Activated CD8-positive, alpha-beta T cell treated with anti-CD3 and anti-CD28 coated beads, Interleukin-2, amount 10 ng/mL, durations not matched to agents 7 days and 5 days (primary cell): ENCODE measurements at regions of chr7 and their contacts with region 1.

Region 1: DNA sequence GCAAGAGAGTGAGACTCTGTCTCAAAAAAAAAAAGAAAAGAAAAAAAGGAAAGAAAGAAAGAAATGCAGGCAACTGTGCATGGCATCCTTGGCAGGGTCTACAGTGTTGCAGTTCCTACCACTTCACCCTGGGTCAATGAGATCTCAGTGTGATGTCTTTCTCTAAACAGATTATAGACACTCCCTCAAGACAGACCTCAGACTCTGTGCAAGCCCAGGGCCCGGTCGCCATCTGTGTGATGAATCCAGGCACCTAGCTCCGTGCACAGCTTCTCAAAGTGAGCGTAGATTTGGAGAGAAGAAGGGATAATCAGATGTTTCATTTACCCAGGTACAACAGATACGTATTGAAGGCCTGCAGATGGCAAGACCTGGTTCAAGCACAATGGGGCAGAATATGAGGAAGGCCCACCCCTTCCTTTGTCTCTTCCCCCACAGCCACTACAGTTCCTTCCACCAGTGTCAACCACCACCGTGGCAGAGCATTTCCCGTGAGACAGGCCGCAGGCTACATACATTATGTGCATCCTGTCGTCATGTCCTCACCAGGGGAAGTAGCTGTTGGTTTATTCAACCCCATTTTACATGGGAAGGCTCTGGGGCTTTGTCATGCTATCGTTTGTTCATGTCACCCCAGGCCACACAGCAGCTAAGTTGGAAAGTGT is 471.7 kb upstream of the GALNT17 start:
- DNase-seq: peak; percentile 85
- ATAC-seq: peak; percentile 95
- H3K4me3 Mint-ChIP-seq: no peak overlapping the region
- H3K27ac Mint-ChIP-seq: peak overlapping the region; percentile 82
- H3K4me1 Mint-ChIP-seq: peaks cover 44% of the 10 kb centered on the region
- H3K27me3 Mint-ChIP-seq: no peaks in the 10 kb centered on the region

Region 2: GRCh38 chr7:70647801-70648498 is 12.3 kb before region 1 on chr7:
- CTCF ChIA-PET with region 1: interaction called, 7 read pairs
- POLR2A ChIA-PET with region 1: interaction called, 13 read pairs
- DNase-seq: peak; percentile 95
- ATAC-seq: peak; percentile 98
- H3K4me3 Mint-ChIP-seq: peak overlapping the region; percentile 26
- H3K27ac Mint-ChIP-seq: peak overlapping the region; percentile 82
- H3K4me1 Mint-ChIP-seq: peaks cover 36% of the 10 kb centered on the region
- H3K27me3 Mint-ChIP-seq: peaks cover 14% of the 10 kb centered on the region

Region 3: DNA sequence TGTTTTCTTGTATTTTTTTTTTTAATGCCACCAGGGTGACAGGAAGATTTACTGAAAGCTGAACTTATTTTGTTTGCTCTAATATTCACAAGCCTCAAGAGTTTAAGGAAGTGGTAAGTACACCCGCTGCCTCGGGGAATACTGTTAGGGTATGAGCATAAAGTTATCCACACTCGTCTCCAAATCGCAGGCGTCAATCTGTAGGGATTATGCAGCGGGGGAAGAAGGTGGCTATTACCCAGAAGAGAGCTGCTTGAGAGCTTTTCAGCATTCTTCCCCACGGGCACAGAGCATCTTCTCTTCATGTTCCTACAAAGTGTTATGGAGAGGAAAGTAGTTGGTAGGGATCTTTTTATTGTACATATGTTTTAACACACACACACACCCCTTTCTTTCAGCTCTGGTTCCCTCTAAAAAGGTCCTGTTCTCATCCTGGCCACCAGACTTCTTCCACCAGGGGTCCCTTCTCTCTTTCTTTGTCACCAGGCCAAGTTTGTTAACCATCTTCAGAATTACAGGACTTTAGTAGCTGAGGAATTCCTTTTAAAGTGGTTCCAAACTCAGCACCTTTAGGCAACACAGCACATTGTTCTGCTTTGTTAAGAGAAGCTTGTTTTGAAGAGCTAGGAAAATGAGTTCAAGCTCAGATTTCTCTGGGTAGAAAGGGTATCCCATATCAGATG is 60.0 kb after region 1 on chr7:
- CTCF ChIA-PET with region 1: no interaction called
- POLR2A ChIA-PET with region 1: no interaction called
- DNase-seq: no peak
- ATAC-seq: no peak
- H3K4me3 Mint-ChIP-seq: no peak overlapping the region
- H3K27ac Mint-ChIP-seq: no peak overlapping the region
- H3K4me1 Mint-ChIP-seq: peaks cover 2% of the 10 kb centered on the region
- H3K27me3 Mint-ChIP-seq: no peaks in the 10 kb centered on the region